ENCODE measurements at regions of chr3 and their contacts with region 1.

Region 1: GRCh38 chr3:27312044-27312668 is 57.0 kb downstream of the NEK10 start:
- DNase-seq: no peak

Region 2: DNA sequence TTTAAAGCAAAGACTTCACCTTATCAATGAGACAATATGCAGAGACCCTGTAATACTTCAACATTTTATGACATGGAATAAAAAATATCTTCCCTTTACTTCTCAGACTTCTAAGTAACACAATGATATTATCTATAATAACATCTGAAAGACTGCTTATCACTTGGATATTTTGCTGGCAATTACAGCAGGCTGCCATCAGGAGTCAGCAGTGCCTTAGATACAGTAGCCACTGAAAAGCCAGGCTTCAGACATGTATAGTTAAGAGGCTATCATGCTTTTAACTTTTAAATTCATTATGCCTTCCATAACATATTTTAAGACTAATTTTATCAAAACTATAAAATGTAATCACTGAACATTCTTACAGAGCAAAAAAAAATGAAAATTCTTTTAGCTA is 170.5 kb before region 1 on chr3:
- intact Hi-C with region 1: no loop called
- DNase-seq: no peak

Region 3: GRCh38 chr3:27392950-27393679 is 81.0 kb after region 1 on chr3:
- intact Hi-C with region 1: no loop called
- DNase-seq: no peak

Region 4: GRCh38 chr3:27467545-27467944 is 155.4 kb after region 1 on chr3:
- intact Hi-C with region 1: loop called (anchors 5 kb)
- DNase-seq: no peak

Region 5: DNA sequence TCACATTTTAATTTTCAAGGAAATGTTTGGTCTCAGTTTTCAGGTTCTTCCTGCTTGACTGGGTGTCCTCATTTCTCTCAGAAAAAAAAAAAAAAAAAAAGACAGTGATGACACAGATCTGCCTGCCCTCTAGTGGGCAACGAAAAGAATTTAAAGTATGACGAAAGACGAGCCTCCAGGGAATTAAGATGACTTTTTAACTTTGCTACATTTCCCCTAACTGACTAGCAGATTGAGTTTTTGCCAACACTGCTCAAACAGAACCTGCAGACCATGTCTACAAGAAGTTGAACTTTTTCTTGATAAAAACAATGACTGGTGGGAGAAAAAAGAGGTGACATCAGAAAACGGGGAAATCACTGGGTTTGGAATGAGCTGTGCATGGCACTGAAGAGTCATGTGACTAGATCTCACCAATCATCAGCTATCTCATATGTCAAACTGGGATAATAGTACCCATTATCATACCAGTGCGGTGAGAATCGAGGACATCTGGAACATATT is 369.1 kb after region 1 on chr3:
- intact Hi-C with region 1: loop called (anchors 5 kb)
- DNase-seq: no peak

Region 6: GRCh38 chr3:27880969-27881892 is 569.1 kb after region 1 on chr3:
- intact Hi-C with region 1: no loop called
- DNase-seq: no peak

Region 7: DNA sequence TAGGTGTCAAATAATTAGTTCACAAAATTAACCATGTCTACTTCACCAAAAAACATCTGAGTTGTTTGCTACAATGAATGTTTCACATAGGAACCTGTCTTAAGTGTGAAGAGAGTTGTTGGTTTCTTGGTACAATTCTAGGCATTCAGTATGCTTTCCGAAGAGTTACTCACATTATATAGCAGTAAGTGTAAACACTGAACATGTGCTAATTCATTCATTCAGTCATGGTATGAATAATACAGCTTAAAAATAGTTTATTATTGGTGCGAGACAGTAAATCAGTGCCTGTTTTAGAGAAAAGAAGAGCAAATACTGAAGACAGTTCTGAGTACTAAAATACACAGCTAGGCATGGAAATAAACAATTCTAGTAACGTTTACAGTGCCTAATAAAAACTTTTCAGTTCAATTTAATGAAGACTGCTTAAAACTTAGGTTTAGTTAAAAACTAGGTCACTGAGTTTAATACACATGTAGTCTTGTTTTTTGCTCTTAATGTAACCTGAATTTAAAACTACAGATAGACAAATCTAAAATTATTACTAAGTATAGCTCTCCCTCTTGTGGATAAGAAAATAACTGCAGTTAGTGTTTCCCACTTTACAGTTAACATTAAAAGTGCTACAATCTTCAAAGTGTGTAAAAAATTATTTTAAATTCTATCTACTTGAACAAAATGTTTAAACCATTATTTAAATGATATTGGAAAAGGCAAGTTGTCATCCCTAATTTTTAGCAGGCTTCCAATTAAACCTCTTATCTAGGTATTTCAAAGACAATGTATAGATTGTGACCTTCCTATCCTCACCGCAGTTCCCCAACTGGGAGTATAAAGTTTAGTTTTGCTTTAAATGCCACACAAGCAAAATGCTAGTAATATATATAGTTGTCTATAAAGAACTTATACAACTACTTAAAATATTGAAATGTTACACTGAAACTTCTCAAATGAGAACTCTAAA is 1016.3 kb after region 1 on chr3:
- intact Hi-C with region 1: loop called (anchors 10 kb)
- DNase-seq: no peak